Activated T-helper 2 cell treated with anti-CD3 and anti-CD28 coated beads, Interferon-gamma antibody, Interleukin-2, Interleukin-4, amounts not matched to agents 10 μg/mL and 5 μg/mL and 100 μg/mL, durations not matched to agents 14 hours and 24 hours and 36 hours (primary cell): ENCODE measurements at regions of chr7 and their contacts with region 1.

Region 1: GRCh38 chr7:7968543-7969305 is at the start of gene GLCCI1:
- DNase-seq: peak; percentile 97
- H3K4me3 Mint-ChIP-seq: peak within 1 kb of the TSS; percentile 94
- H3K27ac Mint-ChIP-seq: peak within 1 kb of the TSS; percentile 95
- H3K4me1 Mint-ChIP-seq: peaks cover 24% of the 10 kb centered on the region
- H3K27me3 Mint-ChIP-seq: no peaks in the 10 kb centered on the region
- total RNA-seq, gene GLCCI1: 23.8 and 27.9 TPM in 2 replicates

Region 2: DNA sequence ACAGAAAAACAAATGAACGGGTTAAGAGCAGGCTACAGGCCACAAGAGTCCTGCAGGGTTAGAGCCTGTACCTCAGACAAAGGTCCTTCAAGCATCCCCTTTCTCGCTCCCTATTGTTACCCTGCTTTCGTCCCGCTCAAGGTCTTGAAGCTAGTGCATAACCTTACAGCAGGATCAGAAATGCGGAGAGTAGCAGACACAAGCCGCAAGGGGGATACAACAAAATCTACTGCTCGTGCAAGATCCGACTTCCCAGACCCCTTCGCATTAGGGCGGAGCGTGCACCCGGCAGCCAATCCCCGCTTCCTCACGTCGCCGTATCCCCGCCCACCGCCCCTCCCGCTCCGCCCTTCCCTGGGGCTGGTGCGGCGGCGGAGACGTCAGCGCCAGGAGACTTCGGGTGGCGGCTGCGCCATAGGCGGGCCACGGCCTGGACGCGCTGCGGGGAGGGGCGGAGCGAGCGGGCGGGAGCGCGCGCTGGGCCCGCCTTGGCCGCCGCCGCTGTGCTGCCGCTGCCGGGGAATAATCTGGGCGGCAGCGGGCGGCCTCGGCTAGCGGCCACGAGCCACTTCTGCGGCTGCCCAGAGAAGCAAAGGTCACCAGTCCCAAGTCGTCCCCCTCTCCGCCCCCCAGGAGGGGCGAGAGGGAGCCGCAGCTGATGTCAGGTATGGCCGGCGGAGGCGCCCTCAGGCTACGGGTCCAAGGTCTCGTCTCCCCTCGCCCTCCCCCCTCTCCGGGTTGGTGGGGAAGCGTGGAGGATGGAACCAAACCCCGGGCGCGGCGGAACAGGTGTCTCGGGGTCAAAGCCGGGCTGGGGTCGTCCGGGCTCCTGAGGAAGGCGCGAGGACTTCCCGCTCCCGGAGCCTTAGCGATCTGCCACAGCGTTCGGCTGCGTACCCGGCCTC is 786.3 kb before region 1 on chr7 and contains the start of gene C1GALT1:
- intact Hi-C with region 1: loop called (anchors 10 kb)
- DNase-seq: peak; percentile 95
- H3K4me3 Mint-ChIP-seq: peak within 1 kb of the TSS; percentile 95
- H3K27ac Mint-ChIP-seq: peak within 1 kb of the TSS; percentile 99
- H3K4me1 Mint-ChIP-seq: peaks cover 22% of the 10 kb centered on the region
- H3K27me3 Mint-ChIP-seq: no peaks in the 10 kb centered on the region
- total RNA-seq, gene C1GALT1: 37.1 and 37.6 TPM in 2 replicates

Region 3: GRCh38 chr7:7681179-7681935 is 287.4 kb before region 1 on chr7:
- intact Hi-C with region 1: loop called (anchors 5 kb)
- DNase-seq: no peak
- H3K4me3 Mint-ChIP-seq: no peak overlapping the region
- H3K27ac Mint-ChIP-seq: peak overlapping the region; percentile 36
- H3K4me1 Mint-ChIP-seq: peaks cover 16% of the 10 kb centered on the region
- H3K27me3 Mint-ChIP-seq: no peaks in the 10 kb centered on the region

Region 4: DNA sequence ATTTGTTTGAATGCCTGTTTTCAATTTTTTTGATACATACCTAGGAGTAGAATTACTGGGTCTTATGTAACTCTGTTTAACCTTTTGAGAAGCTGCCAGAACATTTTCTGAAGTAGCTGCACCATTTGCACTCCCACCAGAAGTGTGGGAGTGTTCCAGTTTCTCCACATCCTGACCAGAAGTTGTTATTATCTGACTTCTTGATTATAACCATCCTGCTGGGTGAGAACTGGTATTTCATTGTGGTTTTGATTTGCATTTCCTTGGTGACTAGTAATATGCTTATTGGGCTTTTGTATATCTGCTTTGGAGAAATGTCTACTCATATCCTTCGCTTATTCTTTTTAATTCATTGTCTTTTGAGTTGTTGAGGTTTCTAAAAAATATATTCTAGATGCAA is 117.3 kb before region 1 on chr7:
- intact Hi-C with region 1: loop called (anchors 5 kb)
- DNase-seq: no peak
- H3K4me3 Mint-ChIP-seq: no peak overlapping the region
- H3K27ac Mint-ChIP-seq: no peak overlapping the region
- H3K4me1 Mint-ChIP-seq: peaks cover 35% of the 10 kb centered on the region
- H3K27me3 Mint-ChIP-seq: no peaks in the 10 kb centered on the region

Region 5: DNA sequence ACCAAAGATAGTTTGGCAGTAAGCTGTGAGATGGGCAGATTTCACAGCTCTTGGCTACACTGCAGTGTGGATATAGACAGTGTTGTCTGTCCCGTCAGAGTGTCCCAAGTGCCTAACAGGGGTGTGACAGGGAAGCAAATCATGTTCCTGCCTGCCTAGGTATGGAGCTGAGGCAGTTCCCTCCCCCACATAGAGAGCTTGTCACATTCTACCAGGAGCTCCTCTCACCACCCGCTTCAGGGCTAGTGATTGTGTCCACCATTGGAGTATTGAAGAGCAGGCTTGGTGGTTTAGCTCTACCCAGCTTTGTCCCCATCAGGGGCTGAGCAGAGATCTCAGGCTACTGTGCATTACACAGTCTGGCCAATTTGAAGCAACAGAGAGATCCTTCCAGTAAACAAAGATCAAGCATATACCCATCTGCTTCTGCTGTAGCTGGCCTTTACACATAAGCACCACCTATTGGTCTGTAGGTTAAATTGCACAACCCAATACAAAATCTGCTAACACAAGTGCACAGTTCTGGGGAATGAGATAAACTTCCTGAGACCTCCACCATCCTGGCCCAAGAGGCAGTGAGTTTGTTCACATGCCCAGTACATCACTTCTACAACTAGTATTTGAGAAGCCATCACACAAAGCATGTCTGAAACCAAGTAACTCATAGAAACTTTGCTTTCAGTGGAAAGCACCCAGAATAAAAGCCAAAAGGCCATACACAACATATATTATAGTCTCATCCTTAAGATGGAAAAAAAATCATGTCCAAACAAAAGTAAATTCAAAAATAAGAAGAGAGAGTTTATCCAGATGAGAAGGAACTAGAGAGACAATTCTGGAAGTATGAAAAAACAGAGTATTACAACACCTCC is 67.2 kb after region 1 on chr7:
- intact Hi-C with region 1: loop called (anchors 5 kb)
- DNase-seq: no peak
- H3K4me3 Mint-ChIP-seq: no peak overlapping the region
- H3K27ac Mint-ChIP-seq: peak overlapping the region; percentile 25
- H3K4me1 Mint-ChIP-seq: peaks cover 23% of the 10 kb centered on the region
- H3K27me3 Mint-ChIP-seq: no peaks in the 10 kb centered on the region

Region 6: GRCh38 chr7:8176370-8177081 is 207.8 kb after region 1 on chr7:
- intact Hi-C with region 1: loop called (anchors 2 kb)
- DNase-seq: peak; percentile 62
- H3K4me3 Mint-ChIP-seq: peak overlapping the region; percentile 62
- H3K27ac Mint-ChIP-seq: peak overlapping the region; percentile 95
- H3K4me1 Mint-ChIP-seq: peaks cover 49% of the 10 kb centered on the region
- H3K27me3 Mint-ChIP-seq: no peaks in the 10 kb centered on the region